ENCODE measurements at regions of chr5 and their contacts with region 1.

Region 1: DNA sequence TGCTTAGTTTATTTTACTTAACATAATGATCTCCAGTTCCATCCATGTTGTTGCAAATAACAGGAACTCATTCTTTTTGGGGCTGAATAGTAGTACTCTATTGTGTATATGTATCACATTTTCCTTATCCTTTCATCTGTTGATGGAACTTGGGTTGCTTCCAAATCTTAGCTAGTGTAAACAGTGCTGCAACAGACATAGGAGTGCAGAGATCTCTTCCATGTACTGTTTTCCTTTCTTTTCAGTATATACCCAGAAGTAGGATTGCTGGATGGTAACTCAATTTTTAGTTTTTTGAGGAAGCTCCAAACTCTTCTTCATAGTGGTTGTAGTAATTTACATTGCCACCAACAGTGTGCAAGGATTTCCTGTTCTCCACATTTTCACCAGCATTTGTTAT is 138.8 kb upstream of the POC5 start:
- DNase-seq: no peak

Region 2: DNA sequence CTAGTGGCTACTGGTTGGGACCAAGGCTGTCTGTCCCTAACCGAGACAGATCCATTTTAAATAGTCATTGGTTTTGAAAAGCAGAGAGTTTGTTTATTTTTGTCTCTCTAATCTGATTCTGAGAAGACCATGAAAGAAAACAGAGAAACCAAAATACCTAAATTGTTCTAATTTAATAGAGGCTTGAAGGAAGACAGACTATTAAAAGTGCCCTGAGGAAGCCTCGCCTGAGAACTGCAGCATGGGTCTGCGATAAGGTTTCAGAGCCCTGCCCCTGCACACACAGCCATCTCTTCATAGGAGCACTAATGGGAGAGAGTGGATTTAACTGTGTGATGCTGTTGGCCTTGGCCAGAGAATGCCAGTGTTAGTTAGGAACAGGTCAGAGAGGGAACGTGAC is 51.6 kb after region 1 on chr5:
- intact Hi-C with region 1: loop called in 1 of 2 experiments (anchors 2 kb)
- DNase-seq: no peak

Measured in posterior vena cava (tissue), 2 donors.